Naive thymus-derived CD4-positive, alpha-beta T cell (primary cell): ENCODE measurements at regions of chr2 and their contacts with region 1.

Region 1: GRCh38 chr2:216683846-216684507 is 11.4 kb downstream of the IGFBP5 start:
- DNase-seq: no peak
- ATAC-seq: peak; percentile 59
- H3K4me3 ChIP-seq: no peak overlapping the region
- H3K4me3 Mint-ChIP-seq: no peak overlapping the region
- H3K27ac ChIP-seq: no peak overlapping the region
- H3K27ac Mint-ChIP-seq: no peak overlapping the region
- H3K4me1 ChIP-seq: no peaks in the 10 kb centered on the region
- H3K4me1 Mint-ChIP-seq: peaks cover 0 to 13% (median 0%) of the 10 kb centered on the region in 7 donors
- H3K27me3 ChIP-seq: peaks cover 0 to 3% of the 10 kb centered on the region in 2 donors
- H3K27me3 Mint-ChIP-seq: peaks cover 21 to 52% (median 29%) of the 10 kb centered on the region in 5 donors

Region 2: DNA sequence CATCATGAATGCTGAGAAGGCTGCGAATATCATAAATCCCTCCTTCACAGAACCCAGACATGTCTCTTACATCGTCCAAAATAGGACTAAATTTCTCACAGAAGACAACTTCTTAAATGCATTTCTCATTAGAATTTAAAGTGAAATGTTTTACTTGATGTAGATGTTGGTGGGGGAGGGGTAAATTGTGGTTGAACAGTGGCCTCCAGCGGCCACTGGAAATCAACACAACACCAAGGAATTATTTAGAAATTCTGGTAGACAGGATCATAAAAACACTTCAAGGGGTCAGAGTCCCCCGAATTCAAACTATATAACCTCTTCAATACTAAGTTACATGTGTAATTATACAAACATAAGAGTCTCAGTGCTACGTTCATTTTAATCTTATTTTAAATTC is 1681.5 kb before region 1 on chr2:
- CTCF ChIA-PET with region 1: no interaction called
- POLR2A ChIA-PET with region 1: no interaction called
- intact Hi-C with region 1: no loop called
- DNase-seq: no peak
- ATAC-seq: no peak
- H3K4me3 ChIP-seq: no peak overlapping the region
- H3K4me3 Mint-ChIP-seq: no peak overlapping the region
- H3K27ac ChIP-seq: no peak overlapping the region
- H3K27ac Mint-ChIP-seq: no peak overlapping the region
- H3K4me1 ChIP-seq: no peaks in the 10 kb centered on the region
- H3K4me1 Mint-ChIP-seq: no peaks in the 10 kb centered on the region
- H3K27me3 ChIP-seq: no peaks in the 10 kb centered on the region
- H3K27me3 Mint-ChIP-seq: peaks cover 0 to 5% (median 3%) of the 10 kb centered on the region in 5 donors

Region 3: GRCh38 chr2:217166241-217166850 is 482.4 kb after region 1 on chr2:
- CTCF ChIA-PET with region 1: no interaction called
- POLR2A ChIA-PET with region 1: no interaction called
- intact Hi-C with region 1: loop called in 1 of 2 experiments (anchors 1 kb)
- DNase-seq: no peak
- ATAC-seq: no peak
- H3K4me3 ChIP-seq: no peak overlapping the region
- H3K4me3 Mint-ChIP-seq: no peak overlapping the region
- H3K27ac ChIP-seq: no peak overlapping the region
- H3K27ac Mint-ChIP-seq: no peak overlapping the region
- H3K4me1 ChIP-seq: no peaks in the 10 kb centered on the region
- H3K4me1 Mint-ChIP-seq: peaks cover 11 to 20% (median 16%) of the 10 kb centered on the region in 7 donors
- H3K27me3 ChIP-seq: no peaks in the 10 kb centered on the region
- H3K27me3 Mint-ChIP-seq: peaks cover 0 to 33% (median 14%) of the 10 kb centered on the region in 5 donors

Region 4: DNA sequence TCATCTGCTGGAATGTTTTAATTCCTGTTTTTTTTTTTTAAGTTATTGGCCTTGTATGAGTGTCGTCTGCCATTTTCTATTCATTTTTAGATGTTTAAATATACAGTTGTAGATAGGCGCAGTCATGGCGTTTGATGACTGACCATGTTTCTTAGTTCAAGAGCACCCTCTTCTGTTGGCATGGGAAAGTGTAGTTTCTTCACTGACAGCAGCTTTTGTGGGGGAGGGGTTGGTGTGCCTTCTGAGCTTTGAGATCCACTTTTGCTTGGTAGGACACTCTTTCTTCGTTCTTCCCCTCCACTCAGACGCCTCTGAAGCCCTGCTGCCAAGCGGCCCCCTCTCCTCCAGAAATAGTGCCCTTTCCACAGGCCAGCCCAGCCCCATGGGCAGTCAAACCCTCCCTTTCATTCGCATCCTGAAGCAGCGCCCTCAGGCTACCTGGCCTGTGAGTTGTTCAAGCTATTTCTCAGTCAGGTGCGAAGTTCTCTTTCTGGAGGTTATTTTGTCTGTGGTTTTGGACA is 826.9 kb after region 1 on chr2:
- CTCF ChIA-PET with region 1: interaction called, 6 read pairs
- POLR2A ChIA-PET with region 1: no interaction called
- intact Hi-C with region 1: loop called in 1 of 2 experiments (anchors 1 kb)
- DNase-seq: peak in 8 of 9 donors; percentile 11 to 59 (median 40)
- ATAC-seq: peak; percentile 82
- H3K4me3 ChIP-seq: no peak overlapping the region
- H3K4me3 Mint-ChIP-seq: peak overlapping the region in 2 of 10 donors; percentile 14 to 20
- H3K27ac ChIP-seq: no peak overlapping the region
- H3K27ac Mint-ChIP-seq: no peak overlapping the region
- H3K4me1 ChIP-seq: no peaks in the 10 kb centered on the region
- H3K4me1 Mint-ChIP-seq: peaks cover 0 to 13% (median 7%) of the 10 kb centered on the region in 7 donors
- H3K27me3 ChIP-seq: no peaks in the 10 kb centered on the region
- H3K27me3 Mint-ChIP-seq: peaks cover 4 to 19% (median 7%) of the 10 kb centered on the region in 5 donors

Region 5: GRCh38 chr2:217650716-217651360 is 966.9 kb after region 1 on chr2:
- CTCF ChIA-PET with region 1: no interaction called
- POLR2A ChIA-PET with region 1: no interaction called
- intact Hi-C with region 1: loop called in 1 of 2 experiments (anchors 5 kb)
- DNase-seq: peak in 5 of 9 donors; percentile 23 to 42 (median 24)
- ATAC-seq: peak; percentile 56
- H3K4me3 ChIP-seq: no peak overlapping the region
- H3K4me3 Mint-ChIP-seq: no peak overlapping the region
- H3K27ac ChIP-seq: no peak overlapping the region
- H3K27ac Mint-ChIP-seq: peak overlapping the region in 1 of 9 donors; percentile 43
- H3K4me1 ChIP-seq: no peaks in the 10 kb centered on the region
- H3K4me1 Mint-ChIP-seq: peaks cover 0 to 7% (median 2%) of the 10 kb centered on the region in 7 donors
- H3K27me3 ChIP-seq: no peaks in the 10 kb centered on the region
- H3K27me3 Mint-ChIP-seq: no peaks in the 10 kb centered on the region

Region 6: GRCh38 chr2:217756375-217757107 is 1072.6 kb after region 1 on chr2:
- CTCF ChIA-PET with region 1: interaction called, 3 read pairs
- POLR2A ChIA-PET with region 1: no interaction called
- intact Hi-C with region 1: loop called (anchors 1 to 2 kb)
- DNase-seq: peak; percentile 48 to 76 (median 69)
- ATAC-seq: peak; percentile 91
- H3K4me3 ChIP-seq: peak overlapping the region; percentile 51
- H3K4me3 Mint-ChIP-seq: peak overlapping the region; percentile 9 to 73 (median 62)
- H3K27ac ChIP-seq: no peak overlapping the region
- H3K27ac Mint-ChIP-seq: peak overlapping the region in 1 of 9 donors; percentile 51
- H3K4me1 ChIP-seq: peaks cover 0 to 26% of the 10 kb centered on the region in 2 donors
- H3K4me1 Mint-ChIP-seq: peaks cover 18 to 36% (median 25%) of the 10 kb centered on the region in 7 donors
- H3K27me3 ChIP-seq: no peaks in the 10 kb centered on the region
- H3K27me3 Mint-ChIP-seq: peaks cover 0 to 11% (median 0%) of the 10 kb centered on the region in 5 donors